Activated naive CD4-positive, alpha-beta T cell treated with anti-CD3 and anti-CD28 coated beads, Interleukin-2, amount 10 ng/mL, durations not matched to agents 7 days and 5 days (primary cell): ENCODE measurements at regions of chr11 and their contacts with region 1.

Region 1: GRCh38 chr11:103682318-103683184 is 353.9 kb upstream of the DDI1 start:
- DNase-seq: peak; percentile 57
- H3K4me3 Mint-ChIP-seq: no peak overlapping the region
- H3K27ac Mint-ChIP-seq: no peak overlapping the region
- H3K4me1 Mint-ChIP-seq: no peaks in the 10 kb centered on the region
- H3K27me3 Mint-ChIP-seq: no peaks in the 10 kb centered on the region

Region 2: GRCh38 chr11:103515283-103515682 is 167.3 kb before region 1 on chr11:
- CTCF ChIA-PET with region 1: no interaction called
- DNase-seq: no peak
- H3K4me3 Mint-ChIP-seq: no peak overlapping the region
- H3K27ac Mint-ChIP-seq: no peak overlapping the region
- H3K4me1 Mint-ChIP-seq: no peaks in the 10 kb centered on the region
- H3K27me3 Mint-ChIP-seq: no peaks in the 10 kb centered on the region

Region 3: DNA sequence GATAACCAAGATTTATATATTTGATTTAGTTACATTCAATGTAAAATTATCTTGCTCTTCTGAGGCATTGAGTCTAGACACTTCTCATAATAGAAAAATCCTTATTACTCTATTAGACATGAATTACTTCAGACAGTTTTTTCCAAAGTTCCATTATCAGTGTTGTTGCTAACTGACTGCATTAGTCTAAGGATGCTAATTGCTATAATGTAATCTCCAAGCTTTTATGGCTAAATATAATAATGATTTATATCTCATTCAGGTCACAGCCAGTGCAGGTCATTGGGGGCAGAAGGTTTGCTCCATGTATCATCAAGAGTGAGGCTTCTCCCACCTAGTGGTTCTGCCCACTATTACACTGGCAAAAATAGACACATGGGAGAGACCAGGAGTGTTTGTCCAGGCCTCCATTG is 23.3 kb before region 1 on chr11:
- CTCF ChIA-PET with region 1: no interaction called
- DNase-seq: no peak
- H3K4me3 Mint-ChIP-seq: no peak overlapping the region
- H3K27ac Mint-ChIP-seq: no peak overlapping the region
- H3K4me1 Mint-ChIP-seq: no peaks in the 10 kb centered on the region
- H3K27me3 Mint-ChIP-seq: no peaks in the 10 kb centered on the region

Region 4: DNA sequence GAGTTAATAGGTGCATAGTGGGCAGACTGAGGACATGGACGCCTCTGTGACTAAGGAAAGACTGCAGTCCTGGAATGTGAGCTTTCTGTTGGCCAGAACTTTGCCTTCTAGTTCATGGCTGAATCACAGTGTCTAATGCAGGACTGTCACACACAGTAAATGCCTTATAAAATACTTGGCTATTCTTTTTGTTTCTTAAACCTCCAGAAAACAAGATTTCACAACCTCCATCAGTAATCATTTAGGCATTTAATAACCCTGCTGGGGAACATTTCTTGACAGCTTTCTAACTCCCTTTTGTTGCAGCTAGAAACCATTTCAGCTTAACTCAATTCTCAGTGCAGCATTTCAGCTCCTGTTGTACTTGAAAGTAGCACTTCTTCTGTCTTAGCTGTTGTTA is 18.1 kb after region 1 on chr11:
- CTCF ChIA-PET with region 1: interaction called, 14 read pairs
- DNase-seq: no peak
- H3K4me3 Mint-ChIP-seq: no peak overlapping the region
- H3K27ac Mint-ChIP-seq: no peak overlapping the region
- H3K4me1 Mint-ChIP-seq: no peaks in the 10 kb centered on the region
- H3K27me3 Mint-ChIP-seq: no peaks in the 10 kb centered on the region